ENCODE measurements at regions of chr15 and their contacts with region 1.

Region 1: GRCh38 chr15:29103824-29104565 is 165.6 kb downstream of the NSMCE3 start:
- DNase-seq: peak; percentile 57 to 77
- ATAC-seq: peak; percentile 85 to 94 (median 91)
- H3K4me3 ChIP-seq: peak overlapping the region; percentile 15 to 60 (median 45)
- H3K27ac ChIP-seq: peak overlapping the region in 4 of 10 donors; percentile 22 to 68 (median 38)
- H3K4me1 ChIP-seq: peaks cover 0 to 12% (median 10%) of the 10 kb centered on the region in 9 donors
- H3K27me3 ChIP-seq: peaks cover 0 to 7% (median 0%) of the 10 kb centered on the region in 7 donors
- CTCF ChIP-seq: peak; percentile 75 to 90 (median 86)

Region 2: GRCh38 chr15:28881170-28881569 is 222.8 kb before region 1 on chr15:
- intact Hi-C with region 1: loop called in 1 of 10 experiments (anchors 5 kb)
- DNase-seq: no peak
- ATAC-seq: peak in 1 of 8 donors; percentile 24
- H3K4me3 ChIP-seq: no peak overlapping the region
- H3K27ac ChIP-seq: no peak overlapping the region
- H3K4me1 ChIP-seq: peaks cover 0 to 7% (median 5%) of the 10 kb centered on the region in 9 donors
- H3K27me3 ChIP-seq: peaks cover 5 to 26% (median 20%) of the 10 kb centered on the region in 7 donors
- CTCF ChIP-seq: no peak

Region 3: DNA sequence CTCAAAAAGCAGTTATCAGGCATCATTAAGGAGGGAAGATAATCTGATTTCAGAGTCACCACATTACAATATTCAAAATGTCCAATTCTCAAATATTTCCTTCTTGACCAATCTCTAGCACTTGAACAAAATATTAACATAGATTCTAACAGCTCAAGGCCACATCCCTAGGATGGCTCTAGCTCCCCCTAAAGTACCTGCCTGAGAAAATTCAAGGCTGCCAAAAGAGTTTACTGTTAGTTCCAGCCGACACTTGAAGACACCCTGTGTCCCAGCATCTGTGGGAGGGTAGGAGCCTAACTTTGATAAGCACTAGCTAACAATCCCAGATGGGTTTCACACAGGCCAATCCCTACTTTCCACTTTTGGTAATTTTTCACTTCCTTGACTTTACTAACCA is 155.2 kb after region 1 on chr15:
- intact Hi-C with region 1: no loop called
- DNase-seq: no peak
- ATAC-seq: no peak
- H3K4me3 ChIP-seq: no peak overlapping the region
- H3K27ac ChIP-seq: no peak overlapping the region
- H3K4me1 ChIP-seq: no peaks in the 10 kb centered on the region
- H3K27me3 ChIP-seq: no peaks in the 10 kb centered on the region
- CTCF ChIP-seq: no peak

Region 4: DNA sequence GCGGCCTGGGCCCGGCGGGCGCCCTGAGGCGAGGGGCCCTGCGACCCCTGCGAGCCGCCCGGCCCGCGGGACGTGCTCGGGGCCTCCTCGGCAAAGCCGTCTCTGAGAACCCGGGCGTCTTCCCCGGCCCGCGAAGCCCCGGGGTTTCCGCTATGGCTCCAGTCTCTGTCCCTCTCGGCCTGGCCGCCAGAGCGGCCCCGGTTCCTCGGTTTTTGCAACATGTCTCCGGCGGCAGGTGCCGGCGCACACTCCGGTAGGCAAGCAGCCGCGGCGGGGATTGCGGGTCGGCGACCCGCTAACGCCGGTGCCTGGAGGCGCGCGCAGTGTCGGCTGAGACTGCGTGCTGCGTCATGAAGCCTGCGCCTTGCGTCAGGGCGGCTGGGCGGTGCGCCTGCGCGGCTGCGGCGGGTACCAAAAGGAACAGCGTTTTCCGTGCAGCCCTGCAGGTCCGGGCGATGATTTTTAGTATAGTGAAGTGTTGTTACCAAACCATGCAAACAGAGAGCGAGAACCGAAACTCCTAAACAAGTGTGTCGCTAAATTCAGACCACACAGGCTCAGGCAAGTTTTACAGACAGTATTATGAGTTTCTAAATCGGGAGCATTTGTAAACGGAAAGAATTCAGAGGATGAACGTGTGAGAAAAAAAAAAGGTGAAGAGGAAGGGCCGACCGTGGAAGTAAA is 165.6 kb after region 1 on chr15 and contains the start of gene NSMCE3:
- intact Hi-C with region 1: loop called in 1 of 10 experiments (anchors 5 kb)
- DNase-seq: peak; percentile 89 to 92
- ATAC-seq: peak; percentile 99 to 100 (median 100)
- H3K4me3 ChIP-seq: peak within 1 kb of the TSS; percentile 63 to 92 (median 82)
- H3K27ac ChIP-seq: peak within 1 kb of the TSS; percentile 63 to 96 (median 94)
- H3K4me1 ChIP-seq: peaks cover 0 to 38% (median 24%) of the 10 kb centered on the region in 9 donors
- H3K27me3 ChIP-seq: no peaks in the 10 kb centered on the region
- CTCF ChIP-seq: no peak
- total RNA-seq, gene NSMCE3: 5.0 to 9.2 (median 6.4) TPM

Region 5: DNA sequence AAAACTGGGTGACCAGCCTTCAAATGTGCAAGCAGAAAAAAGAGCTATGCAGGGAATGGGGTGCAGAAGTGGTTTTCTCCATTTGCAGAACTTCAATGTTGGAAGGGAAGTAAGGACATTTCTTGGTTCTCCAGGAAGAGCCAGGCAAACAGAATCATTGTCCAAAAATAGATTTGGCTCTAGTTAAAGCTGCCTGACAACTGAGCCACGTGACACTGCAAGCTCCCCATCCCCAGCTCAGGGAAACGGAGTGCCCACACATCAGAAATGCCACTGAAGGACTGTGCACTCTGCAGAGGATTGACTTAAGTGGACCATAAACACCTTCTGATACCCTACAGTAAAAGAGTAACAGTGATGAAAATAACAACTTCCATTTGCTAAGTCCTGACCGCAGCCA is 361.2 kb after region 1 on chr15:
- intact Hi-C with region 1: no loop called
- DNase-seq: peak in 1 of 2 donors; percentile 24
- ATAC-seq: peak; percentile 34 to 86 (median 78)
- H3K4me3 ChIP-seq: no peak overlapping the region
- H3K27ac ChIP-seq: no peak overlapping the region
- H3K4me1 ChIP-seq: peaks cover 0 to 12% (median 6%) of the 10 kb centered on the region in 9 donors
- H3K27me3 ChIP-seq: no peaks in the 10 kb centered on the region
- CTCF ChIP-seq: no peak

Measured in heart right ventricle (tissue), 16 donors.